Right ventricle myocardium superior (tissue), 1 donor: ENCODE measurements at regions of chr12 and their contacts with region 1.

Region 1: DNA sequence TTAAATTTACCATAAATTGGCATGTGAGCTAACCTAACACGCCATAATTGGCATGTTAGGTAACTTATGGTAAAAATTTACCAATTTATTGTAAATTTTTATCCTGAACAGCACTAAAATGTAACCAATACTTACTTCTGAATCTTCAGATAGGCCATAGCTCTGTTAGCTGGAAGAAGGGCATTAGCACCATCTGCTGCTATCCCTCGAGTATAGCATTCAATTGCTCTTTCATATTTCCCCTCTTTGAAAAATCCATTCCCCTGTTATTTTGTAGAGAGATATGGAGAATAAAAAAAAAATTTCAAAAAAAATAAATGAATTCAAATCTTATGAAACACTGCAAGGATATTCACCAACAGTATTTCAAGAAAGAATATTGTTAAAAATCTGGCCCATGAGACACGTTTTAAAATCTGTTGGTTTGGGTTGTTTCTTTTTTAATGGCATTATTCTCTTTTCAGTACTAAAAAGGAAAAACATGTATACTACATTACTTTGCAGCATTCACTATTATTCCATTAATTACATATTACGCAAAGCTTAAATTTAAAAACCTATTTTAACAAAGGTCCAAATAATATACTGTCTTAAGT is 19.1 kb downstream of the RPAP3 start:
- DNase-seq: no peak
- ATAC-seq: peak; percentile 67

Region 2: GRCh38 chr12:47651368-47652254 is 35.1 kb before region 1 on chr12:
- intact Hi-C with region 1: loop called (anchors 5 kb)
- DNase-seq: peak; percentile 63
- ATAC-seq: peak; percentile 89